A549 (cell line): ENCODE measurements at regions of chr3 and their contacts with region 1.

Region 1: GRCh38 chr3:111717601-111718000 is 122.5 kb upstream of the ZBED2 start:
- DNase-seq: peak; percentile 76 to 88
- ATAC-seq: peak; percentile 92 to 96
- H3K4me3 ChIP-seq: no peak overlapping the region
- H3K27ac ChIP-seq: peak overlapping the region; percentile 65 to 83
- H3K4me1 ChIP-seq: peaks cover 7% of the 10 kb centered on the region
- CTCF ChIP-seq: peak; percentile 96
- EP300 ChIP-seq: no peak
- POLR2A ChIP-seq: no peak
- RAD21 ChIP-seq: peak; percentile 99

Region 2: GRCh38 chr3:111681661-111682426 is 35.8 kb before region 1 on chr3:
- CTCF ChIA-PET with region 1: interaction called, 25 read pairs
- POLR2A ChIA-PET with region 1: no interaction called
- DNase-seq: no peak
- ATAC-seq: no peak
- H3K4me3 ChIP-seq: no peak overlapping the region
- H3K27ac ChIP-seq: 0 out of 6 replicates have a peak overlapping the region, but pooled peaks of 1 of the 2 experiments have one; percentile 1
- H3K4me1 ChIP-seq: peaks cover 34% of the 10 kb centered on the region
- CTCF ChIP-seq: no peak
- EP300 ChIP-seq: no peak
- POLR2A ChIP-seq: no peak
- RAD21 ChIP-seq: no peak

Region 3: DNA sequence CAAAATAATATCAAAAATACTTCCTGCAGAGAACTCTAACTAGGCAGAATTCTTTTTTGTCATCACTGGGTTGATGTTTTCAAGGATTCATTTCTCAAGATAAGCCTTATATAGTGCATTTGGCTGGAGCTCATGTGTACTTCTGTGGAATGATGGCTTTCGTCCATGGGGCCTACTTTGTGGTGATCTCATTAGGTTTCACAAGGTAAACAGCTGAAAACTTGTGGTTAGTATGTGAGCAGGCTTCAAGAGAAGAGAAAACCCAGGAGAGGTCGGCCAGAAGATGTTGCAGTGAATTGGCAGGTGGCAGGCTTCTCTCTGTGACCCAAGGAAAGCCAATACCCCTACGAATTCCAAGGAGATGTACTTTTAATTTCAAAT is 20.1 kb after region 1 on chr3:
- CTCF ChIA-PET with region 1: interaction called, 87 read pairs
- POLR2A ChIA-PET with region 1: no interaction called
- DNase-seq: peak in 1 of 2 experiments; percentile 48
- ATAC-seq: no peak
- H3K4me3 ChIP-seq: no peak overlapping the region
- H3K27ac ChIP-seq: peak overlapping the region; percentile 76 to 90
- H3K4me1 ChIP-seq: peaks cover 83% of the 10 kb centered on the region
- CTCF ChIP-seq: no peak
- EP300 ChIP-seq: peak; percentile 20 to 37; a peak in 2 of 5 replicates
- POLR2A ChIP-seq: no peak
- RAD21 ChIP-seq: peak in 1 of 2 experiments; percentile 19; a peak in 1 of 5 replicates

Region 4: DNA sequence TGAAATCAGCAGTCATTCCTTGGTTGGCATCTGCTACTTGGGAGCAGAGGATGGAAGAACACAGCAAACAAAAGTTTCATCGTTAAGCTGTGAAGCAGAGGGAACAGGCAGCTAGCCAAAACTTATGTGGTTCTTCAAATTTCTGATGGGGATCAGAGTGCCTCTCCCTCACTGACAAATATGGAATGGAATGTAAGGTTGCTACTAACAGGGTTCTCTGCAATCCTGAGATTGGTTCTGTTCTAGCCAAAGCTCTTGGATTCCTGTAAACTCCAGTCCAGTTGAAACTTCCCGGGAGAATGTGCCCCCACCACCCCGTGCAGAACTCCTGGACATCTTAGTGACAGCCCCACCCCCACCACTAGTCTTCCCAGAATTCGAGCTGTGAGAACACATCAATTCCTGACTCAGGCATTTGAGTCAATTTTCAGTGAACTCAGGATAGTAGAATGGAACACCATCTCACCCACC is 85.6 kb after region 1 on chr3:
- CTCF ChIA-PET with region 1: interaction called, 13 read pairs
- POLR2A ChIA-PET with region 1: no interaction called
- DNase-seq: peak; percentile 43 to 93
- ATAC-seq: peak; percentile 93
- H3K4me3 ChIP-seq: no peak overlapping the region; the same call in 2 of the 3 replicates
- H3K27ac ChIP-seq: peak overlapping the region; percentile 89 to 97
- H3K4me1 ChIP-seq: peaks cover 59% of the 10 kb centered on the region
- CTCF ChIP-seq: no peak
- EP300 ChIP-seq: peak; percentile 50 to 81; a peak in 3 of 5 replicates
- POLR2A ChIP-seq: no peak
- RAD21 ChIP-seq: peak in 1 of 2 experiments; percentile 44; a peak in 3 of 5 replicates

Region 5: DNA sequence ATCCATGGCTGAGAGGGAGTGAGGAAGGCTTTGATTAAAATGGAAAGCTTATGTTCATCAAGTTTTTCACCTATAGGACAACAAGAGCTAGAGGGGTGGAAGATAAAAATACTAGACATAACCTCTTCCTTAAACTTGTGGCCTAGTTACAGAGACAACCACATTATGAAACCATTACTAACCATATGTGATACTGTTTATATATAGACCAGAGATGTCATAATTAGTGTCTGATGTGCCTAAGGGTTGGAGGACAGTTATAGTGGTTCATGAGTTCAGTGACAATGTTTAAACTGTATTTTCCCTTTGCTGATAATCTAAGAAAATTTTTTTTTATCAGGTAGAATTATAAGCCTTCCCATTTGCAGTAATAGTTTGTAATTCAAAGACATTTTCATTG is 165.2 kb after region 1 on chr3:
- CTCF ChIA-PET with region 1: interaction called, 28 read pairs
- POLR2A ChIA-PET with region 1: no interaction called
- DNase-seq: no peak
- ATAC-seq: no peak
- H3K4me3 ChIP-seq: no peak overlapping the region
- H3K27ac ChIP-seq: no peak overlapping the region
- H3K4me1 ChIP-seq: 0 out of 3 replicates have a peak, but pooled peaks cover 6% of the 10 kb centered on the region
- CTCF ChIP-seq: no peak
- EP300 ChIP-seq: no peak
- POLR2A ChIP-seq: no peak
- RAD21 ChIP-seq: no peak

Region 6: DNA sequence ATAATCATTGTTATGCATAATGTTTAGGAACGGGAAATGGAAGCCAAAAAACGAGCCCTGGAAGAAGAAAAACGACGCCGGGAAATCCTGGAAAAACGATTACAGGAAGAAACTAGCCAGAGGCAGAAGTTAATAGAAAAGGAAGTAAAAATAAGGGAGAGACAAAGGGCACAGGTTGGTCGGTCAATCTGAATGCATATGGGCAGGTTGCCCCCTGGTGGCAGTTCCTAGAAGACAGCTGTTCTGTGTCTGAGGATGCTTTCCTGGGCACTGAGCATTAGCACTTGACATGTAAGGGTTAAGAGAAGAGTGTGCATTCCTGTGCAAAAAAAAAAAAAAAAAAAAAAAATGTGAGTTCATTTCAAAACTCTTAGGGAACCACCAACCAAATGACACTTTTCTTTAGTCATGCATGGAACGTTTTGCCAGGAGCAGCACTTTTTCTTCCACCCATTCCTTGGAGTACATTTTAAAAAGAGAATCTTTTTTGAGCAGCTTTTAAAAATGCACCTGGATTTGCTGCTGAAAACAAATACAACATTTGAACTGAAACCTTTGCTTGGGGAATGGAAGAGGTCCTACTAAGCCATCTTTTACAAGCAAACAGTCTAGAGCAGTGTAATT is 250.2 kb after region 1 on chr3:
- CTCF ChIA-PET with region 1: interaction called, 312 read pairs
- POLR2A ChIA-PET with region 1: no interaction called
- DNase-seq: peak; percentile 31 to 84
- ATAC-seq: peak; percentile 92 to 97
- H3K4me3 ChIP-seq: no peak overlapping the region
- H3K27ac ChIP-seq: peak overlapping the region; percentile 50 to 79
- H3K4me1 ChIP-seq: peaks cover 25% of the 10 kb centered on the region
- CTCF ChIP-seq: peak; percentile 92
- EP300 ChIP-seq: no peak
- POLR2A ChIP-seq: no peak
- RAD21 ChIP-seq: peak; percentile 95 to 98